ENCODE measurements at regions of chr6 and their contacts with region 1.

Region 1: DNA sequence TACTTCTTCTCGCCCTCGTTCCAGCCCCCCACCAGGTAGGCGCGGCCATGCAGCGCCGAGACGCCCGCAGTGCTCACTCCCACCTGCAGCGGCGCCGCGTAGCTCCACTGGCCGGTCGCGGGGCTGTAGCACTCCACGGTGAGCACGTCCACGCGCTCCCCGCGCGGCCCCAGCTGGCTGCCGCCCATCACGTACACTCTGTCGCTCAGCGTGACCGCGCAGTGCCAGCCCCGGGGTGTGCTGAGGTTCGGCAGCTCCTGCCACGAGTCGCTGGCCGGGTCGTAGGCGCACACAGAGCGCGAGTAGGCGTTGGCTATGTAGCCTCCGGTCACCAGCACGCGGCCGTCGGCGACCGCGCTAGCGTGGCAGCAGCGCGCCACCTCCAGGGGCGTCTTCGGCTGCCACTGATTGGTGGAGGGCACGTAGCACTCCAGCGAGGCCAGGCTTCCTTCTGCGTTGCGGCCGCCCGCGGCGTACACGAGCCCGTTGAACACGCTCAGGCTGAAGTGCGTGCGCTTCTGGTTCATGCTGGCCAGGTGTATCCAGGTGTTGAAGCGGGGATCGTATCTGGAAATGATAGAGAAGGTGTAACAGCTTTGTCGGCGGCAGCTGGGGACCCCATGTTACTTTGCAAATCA is 13.7 kb downstream of the KLHL31 start:
- DNase-seq: peak; percentile 86
- H3K4me3 Mint-ChIP-seq: peak overlapping the region; percentile 86
- H3K27ac Mint-ChIP-seq: peak overlapping the region; percentile 90
- H3K4me1 Mint-ChIP-seq: peaks cover 35% of the 10 kb centered on the region
- H3K27me3 Mint-ChIP-seq: peaks cover 20% of the 10 kb centered on the region

Region 2: GRCh38 chr6:53492860-53493634 is 158.8 kb before region 1 on chr6:
- CTCF ChIA-PET with region 1: interaction called, 95 read pairs
- DNase-seq: no peak
- H3K4me3 Mint-ChIP-seq: no peak overlapping the region
- H3K27ac Mint-ChIP-seq: no peak overlapping the region
- H3K4me1 Mint-ChIP-seq: peaks cover 2% of the 10 kb centered on the region
- H3K27me3 Mint-ChIP-seq: peaks cover 16% of the 10 kb centered on the region

Region 3: GRCh38 chr6:53544470-53545308 is 107.2 kb before region 1 on chr6 and contains the start of gene GCLC:
- CTCF ChIA-PET with region 1: interaction called, 22 read pairs
- DNase-seq: peak; percentile 91
- H3K4me3 Mint-ChIP-seq: peak within 1 kb of the TSS; percentile 95
- H3K27ac Mint-ChIP-seq: peak within 1 kb of the TSS; percentile 92
- H3K4me1 Mint-ChIP-seq: peaks cover 57% of the 10 kb centered on the region
- H3K27me3 Mint-ChIP-seq: peaks cover 27% of the 10 kb centered on the region

Measured in activated naive CD4-positive, alpha-beta T cell treated with anti-CD3 and anti-CD28 coated beads, Interleukin-2, amount 10 ng/mL, durations not matched to agents 7 days and 5 days (primary cell).